ENCODE measurements at regions of chr14 and their contacts with region 1.

Region 1: GRCh38 chr14:66359500-66359899 is 126.7 kb upstream of the CCDC196 start:
- DNase-seq: no peak
- ATAC-seq: no peak
- H3K4me3 ChIP-seq: no peak overlapping the region
- H3K27ac ChIP-seq: no peak overlapping the region
- H3K4me1 ChIP-seq: no peaks in the 10 kb centered on the region
- H3K27me3 ChIP-seq: no peaks in the 10 kb centered on the region
- CTCF ChIP-seq: peak; percentile 30 to 72 (median 64)
- POLR2A ChIP-seq: no peak

Region 2: DNA sequence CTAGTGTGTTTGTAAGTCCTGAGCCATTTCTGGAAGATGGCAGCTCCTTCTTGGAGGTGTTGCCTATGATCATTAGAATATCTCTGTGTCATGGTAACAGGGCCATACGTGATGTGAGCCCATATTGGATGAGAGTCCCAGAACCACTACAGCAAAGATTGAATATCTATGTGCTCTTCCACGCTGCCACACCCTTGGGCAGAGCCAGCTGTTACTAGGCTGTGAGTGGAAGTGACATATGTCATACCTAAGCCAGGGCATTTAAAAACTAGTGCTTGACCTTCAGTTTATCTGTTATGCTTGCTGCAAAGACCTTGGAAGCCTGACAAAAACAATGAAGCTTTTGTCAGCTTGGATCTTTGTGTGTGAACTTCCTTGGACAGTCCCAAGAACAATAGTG is 368.4 kb before region 1 on chr14:
- in situ Hi-C with region 1: no loop called
- intact Hi-C with region 1: no loop called
- DNase-seq: no peak
- ATAC-seq: no peak
- H3K4me3 ChIP-seq: no peak overlapping the region
- H3K27ac ChIP-seq: no peak overlapping the region
- H3K4me1 ChIP-seq: no peaks in the 10 kb centered on the region
- H3K27me3 ChIP-seq: no peaks in the 10 kb centered on the region
- CTCF ChIP-seq: no peak
- POLR2A ChIP-seq: no peak

Region 3: DNA sequence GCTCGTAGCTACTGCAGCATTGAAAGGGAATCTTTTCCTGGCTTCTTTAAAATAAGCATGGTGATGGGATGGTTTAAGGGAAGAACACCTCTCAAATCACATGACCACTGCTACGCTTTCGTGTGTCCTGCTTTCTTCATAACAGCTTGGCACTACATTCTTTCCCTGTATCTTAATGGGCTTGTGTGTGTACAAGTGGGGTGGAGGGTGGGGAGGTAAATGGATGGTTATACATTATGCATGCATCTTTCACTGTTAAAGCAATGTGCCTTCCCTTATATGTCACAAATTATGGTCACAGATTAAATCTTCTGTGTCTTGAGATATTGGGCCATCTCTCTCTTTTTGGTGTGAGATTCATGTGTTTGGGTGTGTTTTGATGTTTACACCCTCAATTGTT is 660.3 kb after region 1 on chr14:
- in situ Hi-C with region 1: no loop called
- intact Hi-C with region 1: no loop called
- DNase-seq: no peak
- ATAC-seq: no peak
- H3K4me3 ChIP-seq: no peak overlapping the region
- H3K27ac ChIP-seq: no peak overlapping the region
- H3K4me1 ChIP-seq: no peaks in the 10 kb centered on the region
- H3K27me3 ChIP-seq: no peaks in the 10 kb centered on the region
- CTCF ChIP-seq: no peak
- POLR2A ChIP-seq: no peak

Region 4: GRCh38 chr14:67111022-67111421 is 751.5 kb after region 1 on chr14:
- in situ Hi-C with region 1: loop called in 3 of 4 experiments (anchors 25 kb)
- intact Hi-C with region 1: loop called (anchors 5 kb)
- DNase-seq: no peak
- ATAC-seq: no peak
- H3K4me3 ChIP-seq: no peak overlapping the region
- H3K27ac ChIP-seq: no peak overlapping the region
- H3K4me1 ChIP-seq: no peaks in the 10 kb centered on the region
- H3K27me3 ChIP-seq: no peaks in the 10 kb centered on the region
- CTCF ChIP-seq: no peak
- POLR2A ChIP-seq: no peak

Measured in gastrocnemius medialis (tissue), 4 donors.